ENCODE measurements at regions of chr15 and their contacts with region 1.

Region 1: GRCh38 chr15:69265347-69265955 is 33.3 kb upstream of the PAQR5 start:
- DNase-seq: no peak
- ATAC-seq: no peak
- H3K4me3 ChIP-seq: no peak overlapping the region
- H3K27ac ChIP-seq: no peak overlapping the region
- H3K4me1 ChIP-seq: no peaks in the 10 kb centered on the region
- H3K27me3 ChIP-seq: no peaks in the 10 kb centered on the region
- CTCF ChIP-seq: peak; percentile 8 to 66 (median 61)
- POLR2A ChIP-seq: no peak

Region 2: GRCh38 chr15:69058830-69059556 is 206.5 kb before region 1 on chr15:
- intact Hi-C with region 1: loop called (anchors 10 kb)
- DNase-seq: peak; percentile 87 to 91 (median 89)
- ATAC-seq: peak; percentile 81
- H3K4me3 ChIP-seq: no peak overlapping the region
- H3K27ac ChIP-seq: no peak overlapping the region
- H3K4me1 ChIP-seq: peaks cover 7% of the 10 kb centered on the region
- H3K27me3 ChIP-seq: no peaks in the 10 kb centered on the region
- CTCF ChIP-seq: peak; percentile 57 to 93 (median 90)
- POLR2A ChIP-seq: no peak

Region 3: GRCh38 chr15:69346112-69346511 is 80.7 kb after region 1 on chr15:
- intact Hi-C with region 1: no loop called
- DNase-seq: no peak
- ATAC-seq: no peak
- H3K4me3 ChIP-seq: no peak overlapping the region
- H3K27ac ChIP-seq: no peak overlapping the region
- H3K4me1 ChIP-seq: no peaks in the 10 kb centered on the region
- H3K27me3 ChIP-seq: no peaks in the 10 kb centered on the region
- CTCF ChIP-seq: no peak
- POLR2A ChIP-seq: no peak

Measured in body of pancreas (tissue), 4 donors.